ENCODE measurements at regions of chr14 and their contacts with region 1.

Region 1: DNA sequence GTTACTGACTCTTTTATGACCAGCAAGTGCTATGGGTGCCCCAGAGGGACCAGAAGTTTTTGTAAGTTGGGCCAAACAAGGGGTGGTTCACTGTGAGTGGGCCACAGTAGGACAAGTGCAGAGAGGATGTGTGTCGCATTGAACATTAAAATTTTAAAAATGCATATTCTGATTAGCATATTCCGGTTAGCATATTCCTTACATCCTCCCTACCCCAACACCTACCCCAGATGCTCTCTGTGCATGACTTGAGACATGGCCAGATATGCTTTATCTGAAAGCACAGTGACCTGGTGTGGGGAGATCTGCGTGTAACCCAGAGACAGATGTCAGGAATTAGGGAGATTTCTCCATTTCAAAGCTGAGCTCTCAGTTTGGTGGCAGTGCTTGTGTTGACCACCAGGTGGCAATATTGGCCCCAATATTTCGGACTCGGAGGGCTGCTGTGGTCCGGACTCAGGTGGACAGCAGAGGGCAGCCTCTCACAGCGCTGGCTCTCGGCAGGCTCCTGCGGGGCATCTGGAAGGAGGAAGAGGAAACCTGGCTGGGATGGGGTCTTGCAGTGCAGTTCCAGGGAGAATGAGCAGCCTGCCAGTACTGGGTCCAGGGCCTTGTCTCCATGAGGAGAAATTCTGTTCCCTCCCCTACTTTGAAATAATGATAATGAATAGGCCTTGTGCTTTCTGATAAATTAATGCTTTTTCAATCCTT is 1.6 kb upstream of the CEBPE start:
- DNase-seq: peak; percentile 93
- ATAC-seq: peak; percentile 95
- H3K4me3 ChIP-seq: no peak overlapping the region
- H3K27ac ChIP-seq: no peak overlapping the region
- H3K4me1 ChIP-seq: no peaks in the 10 kb centered on the region
- H3K27me3 ChIP-seq: no peaks in the 10 kb centered on the region
- CTCF ChIP-seq: peak; percentile 99

Region 2: DNA sequence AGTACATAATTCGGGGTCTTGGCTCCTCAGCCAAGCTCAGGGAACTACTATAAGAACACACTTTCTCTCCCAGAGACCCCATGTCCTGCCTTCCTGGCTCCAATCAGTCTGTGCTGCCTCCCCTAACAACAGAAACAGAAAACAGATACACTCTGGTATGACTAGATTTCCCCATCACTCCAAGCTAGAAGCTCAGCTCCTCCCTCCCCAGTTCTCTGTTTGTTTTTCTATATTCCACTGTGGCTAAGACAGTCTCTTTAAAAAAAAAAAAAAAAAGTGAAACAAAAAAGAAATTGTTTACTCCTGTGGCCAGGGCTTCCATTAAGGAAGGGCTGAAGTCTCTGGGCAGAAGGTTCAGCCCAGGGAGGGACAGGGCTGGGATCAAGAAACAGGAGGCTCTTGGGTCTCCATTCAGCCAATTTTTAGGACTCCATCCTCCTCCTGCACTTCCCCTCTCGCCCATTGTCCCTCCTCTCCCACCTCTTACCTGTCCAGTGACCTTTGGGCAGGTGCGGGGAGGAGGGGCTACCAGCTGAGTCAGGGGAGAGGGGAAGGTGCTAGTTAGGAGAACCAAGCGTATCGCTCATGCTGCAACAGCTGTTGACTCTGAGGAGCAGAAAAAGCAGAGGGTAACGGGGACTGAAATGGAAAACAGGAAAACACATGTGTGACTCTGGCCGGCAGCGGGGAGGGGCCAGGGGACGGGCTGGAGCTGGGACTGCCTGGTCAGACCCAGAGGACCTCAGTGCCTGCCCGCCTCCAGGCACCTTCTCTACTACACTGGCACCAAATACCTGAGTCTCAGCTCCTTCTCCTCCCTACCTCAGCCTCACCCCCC is 301.3 kb before region 1 on chr14:
- intact Hi-C with region 1: no loop called
- DNase-seq: peak; percentile 67
- ATAC-seq: no peak
- H3K4me3 ChIP-seq: peak overlapping the region; percentile 44
- H3K27ac ChIP-seq: peak overlapping the region; percentile 85
- H3K4me1 ChIP-seq: peaks cover 43% of the 10 kb centered on the region
- H3K27me3 ChIP-seq: no peaks in the 10 kb centered on the region
- CTCF ChIP-seq: no peak

Region 3: DNA sequence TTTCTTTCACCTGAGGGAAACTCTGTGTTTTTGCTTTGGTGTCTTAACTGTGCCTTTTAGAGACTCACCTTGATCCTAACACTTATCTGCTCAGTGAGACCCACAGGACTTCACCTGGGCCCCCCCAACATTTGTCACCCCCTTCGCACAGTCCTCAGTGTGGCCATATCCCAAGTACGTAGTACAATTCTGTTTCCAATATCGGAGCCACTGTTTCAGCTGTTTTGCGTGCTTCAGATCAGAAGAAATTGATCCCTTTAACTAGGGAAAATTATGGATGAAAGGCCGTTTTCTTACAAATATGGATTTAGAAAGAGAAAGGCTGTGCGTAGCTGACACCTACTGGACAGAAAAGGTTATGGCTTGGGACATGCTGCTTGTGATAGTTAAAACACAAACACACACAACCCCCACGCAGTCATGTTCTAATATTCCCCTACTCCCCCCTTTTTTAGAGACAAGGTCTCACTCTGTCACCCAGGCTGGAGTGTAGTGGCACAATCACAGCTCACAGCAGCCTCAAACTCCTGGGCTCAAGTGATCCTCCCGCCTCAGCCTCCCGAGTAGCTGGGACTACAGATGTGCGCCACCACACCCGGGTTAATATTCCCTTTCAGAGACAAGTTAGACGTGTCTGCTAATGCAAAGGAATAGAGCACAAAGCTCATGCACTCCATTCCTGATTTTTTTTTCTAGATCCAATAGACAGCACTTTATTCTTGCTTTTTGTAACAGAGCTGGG is 66.4 kb after region 1 on chr14:
- intact Hi-C with region 1: loop called (anchors 2 kb)
- DNase-seq: no peak
- ATAC-seq: peak; percentile 81
- H3K4me3 ChIP-seq: no peak overlapping the region
- H3K27ac ChIP-seq: no peak overlapping the region
- H3K4me1 ChIP-seq: peaks cover 10% of the 10 kb centered on the region
- H3K27me3 ChIP-seq: no peaks in the 10 kb centered on the region
- CTCF ChIP-seq: peak; percentile 73

Measured in upper lobe of right lung (tissue), 1 donor.